ENCODE measurements at regions of chr17 and their contacts with region 1.

Region 1: GRCh38 chr17:42120770-42121769 is at the start of gene KAT2A:
- DNase-seq: peak; percentile 89 to 99
- ATAC-seq: peak; percentile 78 to 93
- H3K4me3 ChIP-seq: peak within 1 kb of the TSS; percentile 93
- H3K27ac ChIP-seq: peak within 1 kb of the TSS; percentile 94 to 98
- H3K4me1 ChIP-seq: peaks cover 16% of the 10 kb centered on the region
- CTCF ChIP-seq: no peak
- EP300 ChIP-seq: no peak
- POLR2A ChIP-seq: peak; percentile 93
- RAD21 ChIP-seq: no peak
- polyA plus RNA-seq, gene KAT2A: 42.2 and 57.4 TPM in 2 replicates

Region 2: GRCh38 chr17:42019509-42020404 is 101.3 kb before region 1 on chr17 and contains the start of gene NKIRAS2:
- CTCF ChIA-PET with region 1: interaction called, 658 read pairs
- POLR2A ChIA-PET with region 1: interaction called, 6 read pairs
- DNase-seq: peak; percentile 94 to 98
- ATAC-seq: peak; percentile 72 to 80
- H3K4me3 ChIP-seq: peak within 1 kb of the TSS; percentile 93
- H3K27ac ChIP-seq: peak within 1 kb of the TSS; percentile 92 to 93
- H3K4me1 ChIP-seq: peaks cover 40% of the 10 kb centered on the region
- CTCF ChIP-seq: peak; percentile 86
- EP300 ChIP-seq: no peak
- POLR2A ChIP-seq: peak; percentile 73
- RAD21 ChIP-seq: no peak
- polyA plus RNA-seq, gene NKIRAS2: 52.2 and 54.3 TPM in 2 replicates

Region 3: DNA sequence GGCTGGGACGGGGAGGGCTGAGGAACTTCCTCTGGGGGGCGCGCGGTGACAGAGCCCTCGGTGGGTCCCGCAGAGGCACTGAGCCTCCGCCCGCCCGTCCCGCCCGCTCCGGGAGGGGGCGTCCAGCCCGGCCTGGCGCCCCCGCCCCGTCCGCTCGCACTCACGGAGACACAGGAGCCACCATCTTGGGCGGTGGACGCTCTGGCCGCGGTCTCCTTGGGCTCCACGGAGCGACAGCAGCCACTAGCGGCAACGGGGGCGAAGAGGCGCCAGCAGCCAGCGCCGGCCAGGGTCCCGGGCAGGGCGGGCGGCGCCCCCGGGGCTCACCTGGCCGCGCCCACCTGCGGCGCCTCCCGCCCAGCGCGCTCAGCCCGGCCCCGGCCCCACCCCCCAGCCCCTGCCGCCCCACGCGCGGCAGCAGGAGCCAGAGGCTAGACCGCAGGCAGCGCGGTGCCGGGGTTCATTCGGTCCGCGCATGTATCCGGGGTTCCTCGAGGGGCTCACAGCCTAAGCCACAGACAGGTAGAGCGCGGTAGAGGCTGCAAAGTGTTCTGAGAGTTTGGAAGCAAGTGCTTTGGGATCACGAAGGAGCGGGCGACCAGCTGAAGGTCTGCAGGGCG is 70.6 kb before region 1 on chr17 and contains the start of gene C17orf113:
- CTCF ChIA-PET with region 1: interaction called, 454 read pairs
- POLR2A ChIA-PET with region 1: no interaction called
- DNase-seq: peak; percentile 61 to 89
- ATAC-seq: peak; percentile 87 to 90
- H3K4me3 ChIP-seq: peak within 1 kb of the TSS; percentile 64
- H3K27ac ChIP-seq: peak within 1 kb of the TSS; percentile 76 to 88
- H3K4me1 ChIP-seq: peaks cover 12% of the 10 kb centered on the region
- CTCF ChIP-seq: peak; percentile 82
- EP300 ChIP-seq: no peak
- POLR2A ChIP-seq: peak; percentile 62
- RAD21 ChIP-seq: peak; percentile 40 to 48; a peak in 4 of 5 replicates
- polyA plus RNA-seq, gene C17orf113: 1.0 and 1.4 TPM in 2 replicates

Region 4: GRCh38 chr17:42072323-42073187 is 48.5 kb before region 1 on chr17:
- CTCF ChIA-PET with region 1: interaction called, 454 read pairs
- POLR2A ChIA-PET with region 1: interaction called, 3 read pairs
- DNase-seq: peak in 1 of 2 experiments; percentile 33
- ATAC-seq: peak; percentile 56 to 67
- H3K4me3 ChIP-seq: peak overlapping the region; percentile 44
- H3K27ac ChIP-seq: peak overlapping the region; percentile 55 to 83; a peak in 5 of 6 replicates
- H3K4me1 ChIP-seq: peaks cover 4% of the 10 kb centered on the region; the same call in 2 of the 3 replicates
- CTCF ChIP-seq: no peak
- EP300 ChIP-seq: no peak
- POLR2A ChIP-seq: no peak
- RAD21 ChIP-seq: no peak

Region 5: DNA sequence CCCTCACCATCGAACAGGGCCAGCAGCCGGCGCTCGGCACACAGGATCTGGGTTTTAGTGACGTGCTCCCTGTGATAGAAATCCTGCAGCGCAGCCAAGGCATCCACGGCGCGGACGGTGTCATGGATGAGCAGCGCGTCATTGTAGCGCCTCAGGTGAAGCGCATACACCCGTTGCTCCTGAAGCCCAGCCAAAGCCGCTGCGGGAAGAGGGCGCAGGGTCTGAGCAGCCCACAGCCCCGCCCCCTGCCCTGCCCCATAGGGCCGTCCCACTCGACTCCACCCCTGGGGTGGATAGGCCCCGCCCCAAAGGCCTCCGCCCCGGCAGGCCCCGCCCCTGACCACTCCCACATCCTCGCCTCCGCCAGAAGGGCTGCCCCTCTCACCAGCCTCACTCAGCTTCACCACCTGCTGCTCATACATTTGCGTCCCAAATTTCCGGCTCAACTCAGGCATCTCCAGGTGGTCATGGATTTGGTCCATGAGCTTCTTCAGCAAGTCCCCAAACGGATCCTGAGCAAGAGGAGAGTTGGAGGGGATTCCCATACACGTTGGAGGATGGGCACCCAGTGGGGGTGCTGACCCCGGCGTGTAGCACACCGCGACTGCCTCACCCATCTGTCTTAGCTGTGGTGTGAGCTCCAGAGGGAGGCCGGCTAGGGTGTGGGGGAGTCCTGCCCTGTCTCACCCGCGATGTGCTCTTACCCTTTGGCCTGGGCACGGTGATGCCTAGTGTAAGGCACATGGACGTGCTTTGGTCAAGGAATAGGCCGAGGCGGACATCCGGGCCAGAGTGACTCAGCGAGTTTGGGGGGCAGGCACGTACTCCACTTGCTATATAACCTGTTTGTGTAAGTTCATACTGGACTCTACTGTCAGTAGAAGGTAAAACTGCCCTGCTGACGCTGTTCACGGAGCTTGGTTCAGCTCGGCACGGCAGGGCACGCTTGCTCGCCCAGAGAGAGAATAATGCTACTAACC is 13.2 kb before region 1 on chr17:
- CTCF ChIA-PET with region 1: interaction called, 243 read pairs
- POLR2A ChIA-PET with region 1: no interaction called
- DNase-seq: peak; percentile 76 to 88
- ATAC-seq: peak; percentile 58 to 89
- H3K4me3 ChIP-seq: peak overlapping the region; percentile 28; the same call in 1 of the 3 replicates
- H3K27ac ChIP-seq: peak overlapping the region in 1 of 2 experiments; percentile 69; a peak in 3 of 6 replicates
- H3K4me1 ChIP-seq: peaks cover 11% of the 10 kb centered on the region; the same call in 1 of the 3 replicates
- CTCF ChIP-seq: no peak
- EP300 ChIP-seq: no peak
- POLR2A ChIP-seq: no peak
- RAD21 ChIP-seq: no peak

Region 6: GRCh38 chr17:42183741-42184711 is 63.0 kb after region 1 on chr17:
- CTCF ChIA-PET with region 1: interaction called, 48 read pairs
- POLR2A ChIA-PET with region 1: interaction called, 3 read pairs
- DNase-seq: peak; percentile 74 to 78
- ATAC-seq: peak; percentile 47 to 72
- H3K4me3 ChIP-seq: peak overlapping the region; percentile 48
- H3K27ac ChIP-seq: peak overlapping the region; percentile 74 to 87
- H3K4me1 ChIP-seq: peaks cover 38% of the 10 kb centered on the region
- CTCF ChIP-seq: peak; percentile 97
- EP300 ChIP-seq: no peak
- POLR2A ChIP-seq: peak; percentile 28; the same call in 1 of the 2 replicates
- RAD21 ChIP-seq: peak; percentile 37 to 58; a peak in 4 of 5 replicates